ENCODE measurements at regions of chr2 and their contacts with region 1.

Region 1: GRCh38 chr2:82428251-82428650 is 2030.8 kb downstream of the SUCLG1 start:
- DNase-seq: no peak
- ATAC-seq: no peak
- H3K4me3 ChIP-seq: no peak overlapping the region
- H3K4me3 Mint-ChIP-seq: no peak overlapping the region
- H3K27ac ChIP-seq: no peak overlapping the region
- H3K27ac Mint-ChIP-seq: no peak overlapping the region
- H3K4me1 ChIP-seq: no peaks in the 10 kb centered on the region
- H3K4me1 Mint-ChIP-seq: no peaks in the 10 kb centered on the region
- H3K27me3 ChIP-seq: no peaks in the 10 kb centered on the region
- H3K27me3 Mint-ChIP-seq: no peaks in the 10 kb centered on the region

Region 2: DNA sequence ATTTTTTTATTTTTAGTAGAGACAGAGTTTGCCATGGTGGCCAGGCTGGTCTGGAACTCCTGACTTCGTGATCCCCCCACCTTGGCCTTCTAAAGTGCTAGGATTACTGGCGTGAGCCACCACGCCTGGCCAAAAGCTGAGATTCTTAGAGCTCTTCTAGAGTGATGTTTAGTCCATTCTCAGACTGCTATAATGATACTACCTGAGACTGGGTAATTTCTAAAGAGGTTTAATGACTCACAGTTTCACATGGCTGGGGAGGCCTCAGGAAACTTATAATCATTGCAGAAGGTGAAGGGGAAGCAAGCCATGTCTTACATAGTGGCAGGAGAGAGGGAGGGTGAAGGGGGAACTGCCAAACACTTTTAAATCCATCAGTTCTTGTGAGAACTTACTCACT is 318.8 kb before region 1 on chr2:
- CTCF ChIA-PET with region 1: no interaction called
- POLR2A ChIA-PET with region 1: interaction called in 1 of 2 experiments, 10 read pairs
- DNase-seq: no peak
- ATAC-seq: no peak
- H3K4me3 ChIP-seq: no peak overlapping the region
- H3K4me3 Mint-ChIP-seq: no peak overlapping the region
- H3K27ac ChIP-seq: no peak overlapping the region
- H3K27ac Mint-ChIP-seq: no peak overlapping the region
- H3K4me1 ChIP-seq: no peaks in the 10 kb centered on the region
- H3K4me1 Mint-ChIP-seq: no peaks in the 10 kb centered on the region
- H3K27me3 ChIP-seq: no peaks in the 10 kb centered on the region
- H3K27me3 Mint-ChIP-seq: no peaks in the 10 kb centered on the region

Region 3: DNA sequence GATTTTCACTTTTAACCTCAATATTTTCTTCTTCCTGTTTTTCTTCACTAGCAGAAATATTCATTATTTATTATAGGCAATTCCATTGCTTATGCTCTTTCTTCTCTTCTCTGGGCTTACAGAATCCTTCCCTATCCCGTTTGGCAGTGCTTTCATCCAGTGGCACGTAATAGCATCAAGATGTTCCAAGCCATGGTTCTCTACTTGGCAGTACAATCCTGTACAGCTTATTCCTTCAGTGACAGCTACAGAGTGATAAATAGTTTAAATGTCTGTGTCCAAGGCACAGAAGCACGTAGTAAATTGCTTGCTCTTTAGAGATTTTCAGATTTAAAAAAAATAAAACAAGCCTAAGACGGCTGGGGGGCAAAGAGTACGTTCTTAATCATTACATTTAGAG is 66.5 kb after region 1 on chr2:
- CTCF ChIA-PET with region 1: no interaction called
- POLR2A ChIA-PET with region 1: no interaction called
- DNase-seq: no peak
- ATAC-seq: no peak
- H3K4me3 ChIP-seq: no peak overlapping the region
- H3K4me3 Mint-ChIP-seq: no peak overlapping the region
- H3K27ac ChIP-seq: no peak overlapping the region
- H3K27ac Mint-ChIP-seq: no peak overlapping the region
- H3K4me1 ChIP-seq: no peaks in the 10 kb centered on the region
- H3K4me1 Mint-ChIP-seq: no peaks in the 10 kb centered on the region
- H3K27me3 ChIP-seq: no peaks in the 10 kb centered on the region
- H3K27me3 Mint-ChIP-seq: no peaks in the 10 kb centered on the region